Heart left ventricle (tissue), 16 donors: ENCODE measurements at regions of chr10 and their contacts with region 1.

Region 1: GRCh38 chr10:109978481-109978880 is 29.3 kb upstream of the ADD3 start:
- DNase-seq: peak in 3 of 5 donors; percentile 34 to 40 (median 40)
- ATAC-seq: peak in 3 of 4 donors; percentile 29 to 65 (median 57)
- H3K4me3 ChIP-seq: peak overlapping the region in 1 of 12 donors; percentile 3
- H3K27ac ChIP-seq: peak overlapping the region in 9 of 12 donors; percentile 2 to 45 (median 28)
- H3K4me1 ChIP-seq: peaks cover 0 to 50% (median 21%) of the 10 kb centered on the region in 12 donors
- H3K27me3 ChIP-seq: no peaks in the 10 kb centered on the region
- CTCF ChIP-seq: peak; percentile 62 to 87 (median 79)
- POLR2A ChIP-seq: no peak

Region 2: DNA sequence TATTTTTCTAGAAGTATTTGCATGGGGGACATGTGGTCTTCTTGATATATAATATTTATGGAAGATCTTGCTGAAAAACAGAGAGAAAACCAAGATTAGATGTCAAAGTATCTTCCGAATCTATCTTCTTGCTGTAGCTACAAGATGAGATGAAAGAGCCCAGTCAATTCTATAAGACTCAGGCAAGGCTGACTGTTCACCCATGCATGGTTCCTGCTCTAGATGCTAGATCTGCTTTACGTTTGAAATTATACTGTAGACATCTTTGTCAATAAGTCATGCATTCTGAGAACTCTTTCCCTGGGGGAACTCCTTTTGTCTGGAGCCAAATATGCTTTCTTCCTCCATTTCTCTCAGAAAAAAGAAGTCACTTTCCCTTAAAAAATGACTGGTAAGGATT is 1347.1 kb before region 1 on chr10:
- intact Hi-C with region 1: no loop called
- DNase-seq: no peak
- ATAC-seq: no peak
- H3K4me3 ChIP-seq: no peak overlapping the region
- H3K27ac ChIP-seq: no peak overlapping the region
- H3K4me1 ChIP-seq: no peaks in the 10 kb centered on the region
- H3K27me3 ChIP-seq: no peaks in the 10 kb centered on the region
- CTCF ChIP-seq: no peak
- POLR2A ChIP-seq: no peak

Region 3: GRCh38 chr10:109934958-109935706 is 43.3 kb before region 1 on chr10:
- intact Hi-C with region 1: loop called in 1 of 10 experiments (anchors 5 kb)
- DNase-seq: peak in 4 of 5 donors; percentile 41 to 54 (median 45)
- ATAC-seq: peak; percentile 69 to 93 (median 91)
- H3K4me3 ChIP-seq: no peak overlapping the region
- H3K27ac ChIP-seq: peak overlapping the region in 11 of 12 donors; percentile 25 to 62 (median 39)
- H3K4me1 ChIP-seq: peaks cover 0 to 33% (median 17%) of the 10 kb centered on the region in 12 donors
- H3K27me3 ChIP-seq: no peaks in the 10 kb centered on the region
- CTCF ChIP-seq: no peak
- POLR2A ChIP-seq: no peak

Region 4: DNA sequence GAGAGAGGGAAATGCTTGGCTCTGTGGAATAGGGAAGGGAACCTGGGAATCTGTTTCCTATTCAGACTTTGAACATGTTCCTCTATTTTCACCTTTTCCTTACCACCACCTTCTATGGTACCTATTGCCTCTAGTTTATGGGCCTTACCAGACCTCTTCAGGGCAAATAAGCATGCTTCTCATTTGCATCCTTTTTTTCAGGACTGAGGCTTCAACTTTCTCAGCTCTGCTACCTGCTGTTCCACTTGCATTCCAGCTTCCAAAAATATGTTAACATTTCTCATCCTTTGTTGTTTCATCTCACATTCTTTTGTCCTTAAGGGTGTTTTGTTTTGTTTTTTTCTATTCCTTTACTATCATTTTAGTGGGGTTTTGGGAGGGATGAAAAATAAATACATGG is 151.0 kb after region 1 on chr10:
- intact Hi-C with region 1: loop called in 1 of 10 experiments (anchors 5 kb)
- DNase-seq: no peak
- ATAC-seq: no peak
- H3K4me3 ChIP-seq: no peak overlapping the region
- H3K27ac ChIP-seq: no peak overlapping the region
- H3K4me1 ChIP-seq: peaks cover 0 to 5% (median 0%) of the 10 kb centered on the region in 12 donors
- H3K27me3 ChIP-seq: no peaks in the 10 kb centered on the region
- CTCF ChIP-seq: no peak
- POLR2A ChIP-seq: no peak